ENCODE measurements at regions of chr12 and their contacts with region 1.

Region 1: DNA sequence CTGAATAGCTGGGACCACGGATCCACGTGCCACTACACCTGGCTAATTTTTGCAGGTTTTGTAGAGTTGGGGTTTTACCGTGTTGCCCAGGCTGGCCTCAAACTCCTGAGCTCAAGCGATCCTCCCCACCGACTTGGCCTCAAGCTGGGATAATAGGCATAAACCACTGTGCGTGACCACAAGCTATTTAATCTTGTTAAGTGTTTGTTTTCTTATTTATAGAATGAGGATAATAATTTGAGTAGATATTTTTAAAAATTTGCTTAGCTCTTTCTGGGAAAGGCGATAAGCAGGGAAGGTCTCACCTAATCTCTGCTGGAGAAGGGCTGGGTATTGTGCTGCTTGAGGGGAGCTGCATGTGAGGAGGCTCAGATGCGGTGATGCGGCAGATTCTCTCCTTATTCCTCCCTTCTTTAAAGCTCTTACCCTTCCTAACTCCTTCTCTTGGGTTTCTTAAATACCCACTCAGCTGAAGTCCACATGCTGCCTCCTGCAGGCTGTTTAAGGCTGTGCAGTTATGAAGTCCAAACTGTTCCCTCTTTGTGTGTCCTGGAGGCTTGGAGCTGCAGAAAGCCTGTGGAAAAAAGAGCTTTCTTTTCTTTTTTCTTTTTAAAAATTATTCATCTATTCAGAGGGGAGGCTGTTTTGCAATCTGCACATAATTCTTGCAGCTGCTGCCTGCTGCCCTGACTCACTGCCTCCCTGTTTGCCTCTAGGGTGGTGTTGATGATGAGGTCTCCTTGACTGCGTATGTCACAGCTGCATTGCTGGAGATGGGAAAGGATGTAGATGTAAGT is 37.9 kb downstream of the A2ML1 start:
- DNase-seq: peak in 1 of 2 donors; percentile 29
- H3K4me3 ChIP-seq: no peak overlapping the region
- H3K27ac ChIP-seq: no peak overlapping the region
- H3K4me1 ChIP-seq: no peaks in the 10 kb centered on the region
- H3K27me3 ChIP-seq: no peaks in the 10 kb centered on the region
- CTCF ChIP-seq: peak in 2 of 3 donors; percentile 43 to 61
- POLR2A ChIP-seq: no peak

Region 2: DNA sequence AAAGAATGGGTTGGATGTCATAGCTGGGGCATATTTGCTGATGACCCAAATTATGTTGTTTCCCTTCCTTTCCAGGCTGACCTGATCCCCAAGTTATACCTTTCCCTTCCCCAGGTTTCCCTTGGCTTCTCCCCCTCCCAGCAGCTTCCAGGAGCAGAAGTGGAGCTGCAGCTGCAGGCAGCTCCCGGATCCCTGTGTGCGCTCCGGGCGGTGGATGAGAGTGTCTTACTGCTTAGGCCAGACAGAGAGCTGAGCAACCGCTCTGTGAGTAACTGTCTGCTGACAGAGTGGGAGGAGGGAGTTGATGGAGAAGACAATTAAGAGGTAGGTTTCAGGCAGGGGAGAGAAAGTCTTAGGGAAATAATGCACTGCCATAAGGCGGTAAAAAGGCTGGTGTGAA is 12.9 kb before region 1 on chr12:
- intact Hi-C with region 1: loop called (anchors 2 kb)
- DNase-seq: no peak
- H3K4me3 ChIP-seq: no peak overlapping the region
- H3K27ac ChIP-seq: no peak overlapping the region
- H3K4me1 ChIP-seq: no peaks in the 10 kb centered on the region
- H3K27me3 ChIP-seq: no peaks in the 10 kb centered on the region
- CTCF ChIP-seq: no peak
- POLR2A ChIP-seq: no peak